ENCODE measurements at regions of chr20 and their contacts with region 1.

Region 1: GRCh38 chr20:58650776-58651558 is at the start of gene STX16:
- DNase-seq: peak; percentile 75
- H3K4me3 ChIP-seq: peak within 1 kb of the TSS; percentile 81
- CTCF ChIP-seq: no peak

Region 2: DNA sequence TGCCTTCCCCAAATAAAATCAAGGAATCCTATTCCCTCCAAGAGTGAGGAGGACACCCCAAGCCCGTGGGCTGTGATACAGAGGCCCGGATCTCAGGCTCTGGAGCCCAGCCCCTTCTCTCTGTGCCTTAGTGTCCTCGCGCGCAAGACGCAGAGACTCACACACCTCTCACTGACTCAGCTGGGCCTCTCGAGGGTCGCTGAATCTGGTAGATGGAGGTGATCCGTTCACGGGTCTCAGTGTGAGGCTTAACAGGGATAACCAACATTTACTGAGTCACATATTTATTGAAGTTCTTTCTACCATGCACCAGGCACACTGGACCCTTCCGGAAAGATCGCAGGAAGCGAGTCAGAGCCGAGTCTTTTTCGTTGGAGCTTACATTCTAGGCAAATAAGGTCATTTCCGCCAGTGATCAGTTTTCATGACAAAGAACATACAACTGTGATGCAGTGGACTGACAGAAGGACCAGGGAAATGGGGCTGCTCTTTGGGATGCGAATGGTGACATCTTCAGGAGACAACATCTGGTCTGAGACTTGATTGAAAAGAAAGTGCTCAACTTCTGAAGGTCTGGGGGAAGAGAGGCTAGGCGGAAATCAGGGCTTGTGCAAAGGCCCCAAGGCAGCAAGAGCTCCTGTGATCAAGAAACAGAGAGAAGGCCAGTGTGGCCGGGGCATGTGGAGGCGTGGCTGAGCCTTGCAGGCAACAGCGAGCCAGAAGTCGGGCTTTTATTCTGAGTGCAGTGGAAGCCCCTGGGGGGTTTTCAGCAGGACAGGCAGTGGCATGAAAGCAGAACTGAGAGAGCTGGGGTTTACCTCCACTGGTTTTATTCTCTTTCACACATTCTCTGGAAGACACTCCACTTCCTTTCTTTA is 192.5 kb before region 1 on chr20:
- in situ Hi-C with region 1: loop called (anchors 10 kb)
- DNase-seq: no peak
- H3K4me3 ChIP-seq: no peak overlapping the region
- CTCF ChIP-seq: no peak